ENCODE measurements at regions of chr14 and their contacts with region 1.

Region 1: GRCh38 chr14:64540208-64541157 is at the start of gene HSPA2:
- DNase-seq: peak; percentile 99
- H3K4me3 Mint-ChIP-seq: peak within 1 kb of the TSS; percentile 80
- H3K27ac Mint-ChIP-seq: peak within 1 kb of the TSS; percentile 74
- H3K4me1 Mint-ChIP-seq: peaks cover 12% of the 10 kb centered on the region
- H3K27me3 Mint-ChIP-seq: no peaks in the 10 kb centered on the region
- CTCF ChIP-seq: peak; percentile 67
- total RNA-seq, gene HSPA2: 0.51 and 0.56 TPM in 2 replicates

Region 2: DNA sequence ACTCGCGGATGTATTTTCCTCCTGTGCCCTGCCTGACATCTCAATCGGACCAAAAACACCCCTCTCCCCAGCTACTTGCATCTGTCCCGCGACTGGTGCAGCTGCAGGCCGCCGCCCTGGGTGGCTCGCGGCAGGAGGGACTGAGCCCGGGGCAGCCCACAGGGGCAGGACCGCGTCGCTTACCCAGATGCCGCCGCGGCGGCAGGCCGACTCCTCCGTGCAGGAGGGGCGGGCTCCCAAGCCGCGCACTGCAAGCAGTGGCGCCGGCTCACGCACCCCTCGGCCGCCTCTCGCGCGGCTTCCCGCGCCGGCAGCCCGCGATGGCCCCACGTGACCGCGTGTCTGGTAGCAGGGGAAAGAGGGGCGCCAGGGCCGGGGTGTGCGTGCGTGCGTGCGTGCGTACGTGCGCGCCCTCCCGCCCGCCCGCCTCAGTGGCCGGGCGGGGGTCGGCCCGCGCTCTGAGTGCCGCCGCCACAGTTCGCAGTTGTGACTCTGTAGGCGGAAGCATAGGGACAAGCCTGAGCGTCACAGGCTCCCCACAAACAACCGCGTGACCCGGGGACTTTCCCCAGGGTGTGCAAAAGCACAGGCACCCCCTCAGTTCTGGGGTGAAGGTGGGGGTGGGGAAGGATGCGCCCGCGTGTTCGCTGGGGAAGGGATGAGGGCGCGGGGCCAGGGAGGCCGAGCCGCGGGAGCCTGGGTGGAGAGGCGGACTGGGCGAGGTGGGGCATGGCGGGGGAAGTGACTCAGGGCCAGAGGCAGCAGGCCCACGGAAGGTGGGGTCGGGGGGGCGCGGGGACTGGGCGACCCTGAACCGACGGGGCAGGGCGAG is 36.8 kb before region 1 on chr14 and contains the start of gene ZBTB25:
- CTCF ChIA-PET with region 1: interaction called, 4 read pairs
- POLR2A ChIA-PET with region 1: interaction called, 24 read pairs
- intact Hi-C with region 1: loop called (anchors 1 kb)
- DNase-seq: peak; percentile 90
- H3K4me3 Mint-ChIP-seq: peak within 1 kb of the TSS; percentile 83
- H3K27ac Mint-ChIP-seq: peak within 1 kb of the TSS; percentile 98
- H3K4me1 Mint-ChIP-seq: peaks cover 51% of the 10 kb centered on the region
- H3K27me3 Mint-ChIP-seq: no peaks in the 10 kb centered on the region
- CTCF ChIP-seq: no peak
- total RNA-seq, gene ZBTB25: 11.7 and 15.3 TPM in 2 replicates

Region 3: GRCh38 chr14:64562431-64562830 is 21.9 kb after region 1 on chr14:
- CTCF ChIA-PET with region 1: interaction called, 5 read pairs
- POLR2A ChIA-PET with region 1: interaction called, 14 read pairs
- intact Hi-C with region 1: no loop called
- DNase-seq: no peak
- H3K4me3 Mint-ChIP-seq: no peak overlapping the region
- H3K27ac Mint-ChIP-seq: no peak overlapping the region
- H3K4me1 Mint-ChIP-seq: peaks cover 6% of the 10 kb centered on the region
- H3K27me3 Mint-ChIP-seq: no peaks in the 10 kb centered on the region
- CTCF ChIP-seq: no peak

Region 4: GRCh38 chr14:64569184-64569631 is 28.7 kb after region 1 on chr14:
- CTCF ChIA-PET with region 1: interaction called, 10 read pairs
- POLR2A ChIA-PET with region 1: interaction called, 14 read pairs
- intact Hi-C with region 1: no loop called
- DNase-seq: peak; percentile 81
- H3K4me3 Mint-ChIP-seq: peak overlapping the region; percentile 4
- H3K27ac Mint-ChIP-seq: peak overlapping the region; percentile 77
- H3K4me1 Mint-ChIP-seq: peaks cover 6% of the 10 kb centered on the region
- H3K27me3 Mint-ChIP-seq: no peaks in the 10 kb centered on the region
- CTCF ChIP-seq: no peak

Region 5: DNA sequence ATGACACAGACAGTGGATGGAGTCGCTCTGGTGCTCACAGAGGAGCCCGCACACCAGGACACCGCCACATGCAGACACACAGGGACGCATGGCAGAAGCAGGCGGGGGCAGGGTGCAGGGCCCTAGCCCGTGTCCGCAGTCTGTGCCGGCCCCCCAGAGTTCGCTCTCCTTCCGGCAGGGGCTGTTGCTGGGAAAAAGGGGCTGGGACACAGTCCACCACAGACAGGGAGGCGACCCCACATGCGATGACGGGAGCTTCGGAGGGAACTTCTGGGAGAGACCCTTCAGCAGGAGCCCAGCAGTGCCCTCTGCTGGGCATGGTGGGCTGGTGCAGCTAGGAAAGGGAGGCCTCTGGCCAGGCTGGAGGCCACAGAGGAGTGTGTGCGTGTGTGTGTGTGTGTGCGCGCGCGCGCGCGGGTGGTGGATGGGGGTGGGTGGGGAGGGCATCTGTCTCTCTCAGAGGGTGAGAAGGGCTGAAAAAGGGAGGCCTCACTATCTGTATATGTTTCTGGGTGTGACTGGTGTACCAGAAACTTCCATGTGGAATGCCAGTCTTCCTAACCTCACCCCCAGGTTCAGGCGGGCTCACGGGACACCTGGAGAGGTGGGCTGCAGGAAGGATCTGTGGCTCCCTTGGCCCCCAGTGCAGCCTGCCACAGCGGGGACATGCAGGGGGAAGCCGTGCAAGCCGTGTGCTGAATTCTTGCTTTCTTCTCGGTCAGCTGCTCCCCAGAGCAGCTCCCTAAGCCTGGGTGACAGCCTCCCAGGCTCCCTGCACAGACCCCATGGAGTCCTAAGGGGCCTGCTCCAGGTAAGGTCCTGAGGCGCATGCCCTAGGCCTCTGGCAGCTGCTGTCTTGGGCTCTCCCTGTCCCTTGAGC is 224.4 kb after region 1 on chr14:
- CTCF ChIA-PET with region 1: interaction called, 8 read pairs
- POLR2A ChIA-PET with region 1: interaction called, 5 read pairs
- intact Hi-C with region 1: loop called (anchors 2 kb)
- DNase-seq: peak; percentile 75
- H3K4me3 Mint-ChIP-seq: no peak overlapping the region
- H3K27ac Mint-ChIP-seq: no peak overlapping the region
- H3K4me1 Mint-ChIP-seq: peaks cover 50% of the 10 kb centered on the region
- H3K27me3 Mint-ChIP-seq: no peaks in the 10 kb centered on the region
- CTCF ChIP-seq: peak; percentile 92